AG04449 (cell line): ENCODE measurements at regions of chr2 and their contacts with region 1.

Region 1: DNA sequence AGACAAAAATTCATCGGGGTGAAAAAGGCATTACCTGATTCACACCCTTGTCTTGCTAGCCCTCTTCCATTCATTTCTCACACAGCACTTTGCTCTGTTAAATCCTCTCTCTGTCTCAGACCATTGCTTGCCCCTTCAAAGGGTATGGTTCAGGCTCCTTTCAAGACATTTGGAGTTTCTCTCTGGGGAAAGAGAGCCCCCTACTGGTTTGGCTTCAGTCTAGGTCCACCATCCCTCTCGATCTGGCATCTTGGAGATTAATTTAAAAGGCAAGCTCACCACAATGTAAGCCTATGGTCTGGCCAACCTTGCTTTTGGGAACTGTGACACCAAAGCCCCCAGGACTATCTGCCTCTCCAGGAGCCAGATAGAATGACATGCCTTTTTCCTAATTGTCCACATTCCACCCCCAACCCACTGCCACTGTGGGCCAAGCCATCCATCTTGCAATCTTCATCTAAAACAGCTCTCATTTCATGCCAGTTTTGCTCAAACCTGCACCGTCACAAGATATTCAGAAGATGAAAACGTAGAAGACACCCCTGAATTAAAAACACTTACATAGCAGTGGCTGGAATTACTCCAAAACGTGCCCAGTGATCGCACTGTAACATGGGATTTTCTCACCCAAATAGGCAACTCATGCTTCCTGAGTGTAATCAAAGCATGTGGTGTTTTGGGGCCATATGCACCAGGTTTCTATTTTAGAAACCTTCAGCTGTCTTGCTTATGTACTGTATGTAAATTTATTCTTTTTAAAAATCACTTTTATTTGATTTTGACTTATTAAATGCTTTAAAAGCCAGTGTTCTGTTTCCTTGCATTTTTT is 93.9 kb downstream of the FARSB start:
- DNase-seq: no peak
- H3K4me3 ChIP-seq: no peak overlapping the region
- CTCF ChIP-seq: peak; percentile 54

Region 2: GRCh38 chr2:221997100-221997499 is 564.9 kb before region 1 on chr2:
- CTCF ChIA-PET with region 1: no interaction called
- POLR2A ChIA-PET with region 1: no interaction called
- DNase-seq: peak; percentile 59
- H3K4me3 ChIP-seq: no peak overlapping the region
- CTCF ChIP-seq: no peak

Region 3: DNA sequence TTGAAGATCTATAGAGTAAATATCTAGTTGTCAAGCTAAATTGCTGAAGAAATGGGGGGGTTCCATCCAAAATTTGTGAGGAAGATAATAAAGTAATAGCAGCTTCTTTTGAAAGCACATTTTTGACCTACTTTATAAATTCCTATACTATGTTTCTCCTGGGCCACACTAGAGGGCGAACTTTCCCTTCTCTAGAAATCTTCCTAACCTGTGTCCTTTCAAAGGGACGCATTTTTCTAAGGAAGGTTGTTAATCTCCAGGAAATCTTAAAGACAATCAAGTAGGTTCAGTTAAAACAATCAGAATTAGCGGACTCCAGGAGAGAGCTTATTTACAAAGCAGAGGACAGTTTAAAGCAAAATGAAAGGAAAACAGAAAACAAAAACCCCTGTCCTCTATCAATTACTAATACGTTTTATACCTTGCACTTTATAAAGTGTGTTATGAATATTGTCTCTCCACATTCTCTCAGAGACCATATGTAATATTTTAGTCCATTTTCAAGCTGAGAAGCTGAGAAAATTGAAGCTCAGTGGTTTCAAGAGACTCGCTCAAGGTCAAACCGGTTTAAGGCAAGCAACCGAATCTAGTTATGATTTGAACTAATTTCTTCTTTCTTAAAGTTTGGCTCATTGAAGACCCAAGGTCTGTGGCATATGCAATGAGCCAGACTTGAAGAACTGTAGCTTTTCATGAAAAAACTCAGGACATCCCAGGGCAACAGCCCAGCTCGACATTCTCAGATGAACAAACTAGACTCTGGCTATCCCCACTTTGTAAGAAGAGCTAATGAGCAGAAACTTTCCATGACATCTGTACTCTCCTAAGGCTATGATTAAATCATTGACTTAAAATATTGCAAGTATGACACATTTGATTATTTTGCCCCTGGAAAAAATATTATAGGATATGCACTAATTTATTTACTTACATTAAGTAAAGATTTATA is 536.8 kb before region 1 on chr2:
- CTCF ChIA-PET with region 1: interaction called, 12 read pairs
- POLR2A ChIA-PET with region 1: no interaction called
- DNase-seq: no peak
- H3K4me3 ChIP-seq: no peak overlapping the region
- CTCF ChIP-seq: peak; percentile 40

Region 4: GRCh38 chr2:222038067-222038802 is 523.8 kb before region 1 on chr2:
- CTCF ChIA-PET with region 1: interaction called, 12 read pairs
- POLR2A ChIA-PET with region 1: no interaction called
- DNase-seq: no peak
- H3K4me3 ChIP-seq: no peak overlapping the region
- CTCF ChIP-seq: peak; percentile 20

Region 5: DNA sequence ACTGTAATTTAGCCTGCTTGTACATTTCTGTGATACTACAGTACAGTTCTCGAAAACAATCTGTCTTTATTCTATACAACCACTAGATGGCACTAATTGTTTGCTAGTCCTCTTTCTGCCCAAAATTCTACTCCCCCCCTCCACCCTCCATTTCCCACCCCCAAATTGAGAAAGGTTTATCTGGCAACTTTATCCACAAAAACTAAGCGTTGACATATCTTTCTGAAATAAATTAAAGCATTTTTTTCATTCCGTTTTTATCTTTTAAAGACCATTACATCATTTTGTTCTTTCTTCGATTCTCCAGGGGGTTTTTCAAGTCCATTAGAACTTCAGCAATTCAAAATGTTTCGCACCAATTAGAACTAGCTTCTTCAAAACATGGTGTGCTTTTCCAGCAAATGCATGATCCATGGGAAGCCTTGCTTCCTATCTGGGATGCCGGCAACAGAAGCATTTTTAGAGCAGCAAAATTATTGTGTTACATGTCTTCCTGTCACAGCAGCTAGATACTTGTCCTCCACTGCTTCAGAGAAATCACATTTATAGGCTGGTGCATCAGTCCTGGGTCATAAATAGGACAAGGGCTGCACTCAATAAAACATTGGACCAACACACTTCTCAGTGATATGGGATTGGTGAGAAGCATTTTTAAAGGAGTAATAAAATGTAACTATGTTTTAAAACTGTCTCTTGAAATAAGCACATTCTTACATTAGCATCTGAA is 504.5 kb before region 1 on chr2:
- CTCF ChIA-PET with region 1: interaction called, 12 read pairs
- POLR2A ChIA-PET with region 1: no interaction called
- DNase-seq: no peak
- H3K4me3 ChIP-seq: no peak overlapping the region
- CTCF ChIP-seq: peak; percentile 34